GM12878 (cell line): ENCODE measurements at regions of chr1 and their contacts with region 1.

Region 1: GRCh38 chr1:233675893-233676292 is 62.0 kb downstream of the KCNK1 start:
- DNase-seq: peak; percentile 75
- ATAC-seq: peak; percentile 88
- H3K4me3 ChIP-seq: no peak overlapping the region
- H3K27ac ChIP-seq: peak overlapping the region; percentile 1
- H3K4me1 ChIP-seq: peaks cover 19% of the 10 kb centered on the region
- H3K27me3 ChIP-seq: no peaks in the 10 kb centered on the region
- CTCF ChIP-seq: peak; percentile 16 to 19 (median 18); a peak in 1 of 6 replicates
- EP300 ChIP-seq: peak; percentile 70 to 88; a peak in 3 of 4 replicates
- POLR2A ChIP-seq: no peak
- RAD21 ChIP-seq: no peak

Region 2: DNA sequence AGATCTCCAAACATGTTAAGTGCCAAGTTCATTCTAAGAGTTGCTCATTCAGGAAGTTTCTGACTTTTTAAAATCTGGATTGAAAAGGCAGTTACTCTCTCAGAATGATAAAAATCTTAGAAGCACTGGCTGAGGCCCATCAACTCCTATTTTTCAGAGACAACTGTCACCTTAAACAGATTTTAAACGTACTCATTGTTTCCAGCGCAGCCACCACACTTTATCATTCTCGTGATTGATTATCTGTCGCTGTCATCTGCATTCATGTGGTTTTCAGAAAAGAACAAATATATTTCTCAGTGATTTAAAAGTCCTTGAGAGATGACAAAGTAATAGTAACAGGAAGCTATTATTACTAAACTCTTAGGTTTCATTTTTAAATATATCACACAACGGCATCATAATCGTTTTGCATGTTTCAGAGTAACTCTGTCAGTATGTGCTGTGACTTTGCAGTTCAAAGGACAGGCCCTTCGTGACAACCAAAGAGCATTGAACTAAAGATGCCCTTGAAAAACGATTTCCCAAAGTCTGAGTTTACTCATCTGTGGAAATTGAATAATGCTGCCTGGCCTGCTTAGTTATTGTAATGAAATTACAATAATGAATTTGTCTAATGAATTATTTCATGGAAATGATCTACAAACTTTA is 76.9 kb before region 1 on chr1:
- CTCF ChIA-PET with region 1: interaction called, 7 read pairs
- POLR2A ChIA-PET with region 1: interaction called, 12 read pairs
- RAD21 ChIA-PET with region 1: interaction called, 69 read pairs
- SMC1A ChIA-PET with region 1: interaction called, 39 read pairs
- in situ Hi-C with region 1: no loop called
- intact Hi-C with region 1: loop called (anchors 1 kb)
- DNase-seq: peak; percentile 76
- ATAC-seq: peak; percentile 82
- H3K4me3 ChIP-seq: peak overlapping the region; percentile 33; the same call in 1 of the 2 replicates
- H3K27ac ChIP-seq: peak overlapping the region; percentile 96
- H3K4me1 ChIP-seq: peaks cover 30% of the 10 kb centered on the region
- H3K27me3 ChIP-seq: no peaks in the 10 kb centered on the region
- CTCF ChIP-seq: no peak
- EP300 ChIP-seq: peak; percentile 94 to 98
- POLR2A ChIP-seq: no peak
- RAD21 ChIP-seq: no peak

Region 3: DNA sequence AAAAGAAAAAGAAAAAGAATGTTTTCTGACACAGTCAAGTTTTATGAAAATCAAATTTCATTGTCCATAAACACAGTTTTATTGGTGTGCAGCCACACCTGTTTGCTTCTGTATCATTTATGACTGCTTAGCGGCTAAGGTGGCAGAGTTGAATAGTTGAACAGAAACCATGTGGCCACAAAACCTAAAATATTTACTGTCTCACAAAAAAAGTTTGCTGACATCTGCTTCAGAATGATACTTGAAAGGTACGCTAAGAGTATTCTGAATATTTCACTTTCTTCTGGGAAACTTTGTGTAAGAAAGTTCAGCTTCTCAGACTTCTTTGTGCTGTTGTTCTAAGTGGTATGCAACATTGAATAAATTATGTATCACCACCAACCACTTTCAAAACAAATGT is 55.8 kb before region 1 on chr1:
- CTCF ChIA-PET with region 1: interaction called, 4 read pairs
- POLR2A ChIA-PET with region 1: interaction called, 7 read pairs
- RAD21 ChIA-PET with region 1: interaction called, 39 read pairs
- SMC1A ChIA-PET with region 1: interaction called, 26 read pairs
- in situ Hi-C with region 1: no loop called
- intact Hi-C with region 1: loop called (anchors 1 kb)
- DNase-seq: peak; percentile 49
- ATAC-seq: peak; percentile 59
- H3K4me3 ChIP-seq: no peak overlapping the region
- H3K27ac ChIP-seq: no peak overlapping the region
- H3K4me1 ChIP-seq: peaks cover 23% of the 10 kb centered on the region
- H3K27me3 ChIP-seq: no peaks in the 10 kb centered on the region
- CTCF ChIP-seq: no peak
- EP300 ChIP-seq: peak; percentile 58 to 86; a peak in 3 of 4 replicates
- POLR2A ChIP-seq: no peak
- RAD21 ChIP-seq: no peak

Region 4: DNA sequence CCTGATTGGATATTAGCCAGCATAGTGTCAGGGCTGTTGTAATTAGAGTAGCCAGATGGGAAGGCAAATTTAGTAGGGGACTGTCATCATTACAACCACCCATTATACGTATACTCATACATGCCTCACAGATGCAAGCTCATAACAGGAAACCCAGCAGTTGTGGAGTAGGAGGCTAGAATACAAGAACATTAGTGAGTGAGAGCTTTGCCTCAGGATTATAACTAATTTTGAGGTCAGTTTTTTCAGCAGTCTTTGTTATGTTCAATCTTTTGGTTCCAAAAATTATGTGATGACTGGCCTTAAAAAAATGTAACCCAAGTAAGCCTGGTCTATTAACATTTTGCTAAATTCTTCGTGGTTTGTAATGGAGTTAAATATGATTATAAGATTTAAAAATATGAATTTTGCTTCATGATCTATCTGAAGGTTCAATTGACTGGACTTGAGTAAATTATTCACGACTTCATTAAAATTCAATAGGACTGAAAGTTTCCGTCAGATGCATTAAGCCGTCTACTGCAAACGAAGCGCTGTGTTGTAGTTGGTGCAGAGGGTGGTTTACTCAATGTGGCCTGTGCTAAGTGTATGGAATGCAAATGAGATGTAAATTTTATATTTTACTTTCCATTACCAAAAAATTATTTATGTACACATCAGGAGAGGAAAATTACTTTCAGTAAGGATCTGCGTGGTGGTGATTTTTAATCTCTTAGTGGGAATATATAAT is 13.2 kb before region 1 on chr1:
- CTCF ChIA-PET with region 1: interaction called, 7 read pairs
- POLR2A ChIA-PET with region 1: interaction called, 6 read pairs
- RAD21 ChIA-PET with region 1: interaction called, 8 read pairs
- SMC1A ChIA-PET with region 1: interaction called, 10 read pairs
- in situ Hi-C with region 1: no loop called
- intact Hi-C with region 1: no loop called
- DNase-seq: no peak
- ATAC-seq: peak; percentile 47
- H3K4me3 ChIP-seq: no peak overlapping the region
- H3K27ac ChIP-seq: no peak overlapping the region
- H3K4me1 ChIP-seq: no peaks in the 10 kb centered on the region
- H3K27me3 ChIP-seq: no peaks in the 10 kb centered on the region
- CTCF ChIP-seq: no peak
- EP300 ChIP-seq: no peak
- POLR2A ChIP-seq: no peak
- RAD21 ChIP-seq: no peak

Region 5: DNA sequence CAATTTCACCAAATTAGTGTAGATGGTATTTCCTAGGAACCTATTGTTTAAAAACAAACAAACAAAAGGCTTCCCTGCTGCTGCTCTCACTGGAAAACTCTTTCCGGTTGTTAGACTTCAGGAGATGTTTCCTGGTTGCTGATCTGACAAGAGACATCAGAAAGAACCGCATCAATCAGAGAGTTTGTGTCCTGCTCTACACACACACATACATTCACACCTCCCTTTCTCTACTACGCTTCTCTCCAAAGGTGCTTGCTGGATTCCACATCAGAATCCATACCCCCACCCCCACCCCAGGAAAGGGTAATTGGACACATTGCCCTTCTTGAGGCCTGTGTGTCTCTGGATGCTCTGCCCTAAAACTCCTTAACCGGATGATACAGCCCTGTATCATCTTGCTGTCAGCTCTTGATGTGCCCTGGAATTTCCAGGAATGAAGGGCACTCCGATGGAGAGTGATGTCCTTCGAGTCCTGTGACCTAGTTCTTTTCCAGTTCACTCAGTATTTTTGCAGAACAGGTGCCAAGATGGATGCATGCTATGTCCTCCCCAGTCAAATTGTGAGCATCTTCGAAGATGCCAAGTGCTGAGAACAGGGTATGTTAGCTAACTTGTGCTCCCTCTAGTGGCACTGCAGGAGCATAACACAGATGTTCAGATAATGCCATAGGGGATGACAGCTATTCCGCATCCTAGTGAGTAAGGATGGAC is 114.9 kb after region 1 on chr1:
- CTCF ChIA-PET with region 1: interaction called, 4 read pairs
- POLR2A ChIA-PET with region 1: no interaction called
- RAD21 ChIA-PET with region 1: interaction called, 6 read pairs
- SMC1A ChIA-PET with region 1: no interaction called
- in situ Hi-C with region 1: no loop called
- intact Hi-C with region 1: loop called (anchors 2 kb)
- DNase-seq: peak; percentile 30
- ATAC-seq: peak; percentile 98
- H3K4me3 ChIP-seq: no peak overlapping the region
- H3K27ac ChIP-seq: no peak overlapping the region
- H3K4me1 ChIP-seq: no peaks in the 10 kb centered on the region
- H3K27me3 ChIP-seq: no peaks in the 10 kb centered on the region
- CTCF ChIP-seq: peak; percentile 94 to 97 (median 94); a peak in 5 of 6 replicates
- EP300 ChIP-seq: no peak
- POLR2A ChIP-seq: no peak
- RAD21 ChIP-seq: peak; percentile 97

Region 6: GRCh38 chr1:233928123-233928522 is 252.2 kb after region 1 on chr1:
- CTCF ChIA-PET with region 1: no interaction called
- POLR2A ChIA-PET with region 1: no interaction called
- RAD21 ChIA-PET with region 1: no interaction called
- SMC1A ChIA-PET with region 1: no interaction called
- in situ Hi-C with region 1: no loop called
- intact Hi-C with region 1: no loop called
- DNase-seq: no peak
- ATAC-seq: no peak
- H3K4me3 ChIP-seq: no peak overlapping the region
- H3K27ac ChIP-seq: no peak overlapping the region
- H3K4me1 ChIP-seq: no peaks in the 10 kb centered on the region
- H3K27me3 ChIP-seq: no peaks in the 10 kb centered on the region
- CTCF ChIP-seq: no peak
- EP300 ChIP-seq: no peak
- POLR2A ChIP-seq: no peak
- RAD21 ChIP-seq: no peak

Region 7: GRCh38 chr1:234047123-234047522 is 371.2 kb after region 1 on chr1:
- CTCF ChIA-PET with region 1: no interaction called
- POLR2A ChIA-PET with region 1: no interaction called
- RAD21 ChIA-PET with region 1: no interaction called
- SMC1A ChIA-PET with region 1: no interaction called
- in situ Hi-C with region 1: no loop called
- intact Hi-C with region 1: no loop called
- DNase-seq: no peak
- ATAC-seq: no peak
- H3K4me3 ChIP-seq: no peak overlapping the region
- H3K27ac ChIP-seq: no peak overlapping the region
- H3K4me1 ChIP-seq: no peaks in the 10 kb centered on the region
- H3K27me3 ChIP-seq: no peaks in the 10 kb centered on the region
- CTCF ChIP-seq: no peak
- EP300 ChIP-seq: no peak
- POLR2A ChIP-seq: no peak
- RAD21 ChIP-seq: no peak